ENCODE measurements at regions of chr6 and their contacts with region 1.

Region 1: DNA sequence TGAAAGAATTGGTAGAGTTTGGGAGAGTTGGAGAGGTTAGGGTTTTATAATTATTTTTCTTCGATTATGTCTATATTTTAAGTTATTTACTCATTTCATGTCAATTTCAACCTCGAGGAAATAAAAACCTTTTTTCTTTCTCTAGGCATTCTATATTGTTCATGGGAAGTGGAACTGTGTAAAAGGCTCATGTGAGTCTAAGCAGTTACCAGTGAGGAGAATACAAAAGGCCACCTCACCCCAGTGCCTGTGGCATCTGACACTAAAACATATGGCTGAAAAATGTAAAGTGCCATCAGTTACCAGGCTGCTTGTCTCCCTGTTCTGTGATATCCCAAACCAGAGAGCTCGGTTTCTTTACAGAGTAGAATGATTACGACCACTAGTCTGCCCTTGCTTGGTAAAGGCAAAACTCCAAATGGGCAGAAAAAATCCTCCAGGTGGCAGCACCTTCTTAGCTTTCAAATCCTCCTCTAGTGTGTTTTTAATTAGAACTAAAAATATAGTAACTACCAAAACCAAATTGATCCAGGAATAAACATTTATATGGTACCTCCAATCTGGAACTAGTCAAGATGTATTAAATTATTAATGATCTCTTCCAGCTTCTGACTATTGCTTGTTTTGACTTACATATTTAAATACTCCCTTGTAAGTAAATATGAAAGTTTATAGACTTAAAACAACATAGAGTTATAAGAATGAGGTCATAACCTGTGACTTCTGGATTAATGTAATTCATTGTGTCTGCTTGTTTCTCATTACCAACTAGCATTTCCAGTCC is 122.6 kb upstream of the MCHR2 start:
- DNase-seq: peak; percentile 43
- ATAC-seq: peak; percentile 89
- H3K4me3 ChIP-seq: no peak overlapping the region
- H3K27ac ChIP-seq: no peak overlapping the region
- H3K4me1 ChIP-seq: no peaks in the 10 kb centered on the region
- H3K27me3 ChIP-seq: no peaks in the 10 kb centered on the region; a peak in 1 of 5 replicates
- CTCF ChIP-seq: peak; percentile 63
- EP300 ChIP-seq: no peak
- POLR2A ChIP-seq: no peak
- RAD21 ChIP-seq: no peak

Region 2: GRCh38 chr6:100335991-100336390 is 219.4 kb after region 1 on chr6:
- CTCF ChIA-PET with region 1: no interaction called
- POLR2A ChIA-PET with region 1: no interaction called
- in situ Hi-C with region 1: no loop called
- intact Hi-C with region 1: loop called (anchors 10 kb)
- DNase-seq: no peak
- ATAC-seq: no peak
- H3K4me3 ChIP-seq: no peak overlapping the region
- H3K27ac ChIP-seq: no peak overlapping the region
- H3K4me1 ChIP-seq: no peaks in the 10 kb centered on the region
- H3K27me3 ChIP-seq: no peaks in the 10 kb centered on the region
- CTCF ChIP-seq: no peak
- EP300 ChIP-seq: no peak
- POLR2A ChIP-seq: no peak
- RAD21 ChIP-seq: no peak

Region 3: GRCh38 chr6:100573167-100573566 is 456.6 kb after region 1 on chr6:
- CTCF ChIA-PET with region 1: no interaction called
- POLR2A ChIA-PET with region 1: no interaction called
- in situ Hi-C with region 1: no loop called
- intact Hi-C with region 1: loop called (anchors 2 kb)
- DNase-seq: peak; percentile 15
- ATAC-seq: no peak
- H3K4me3 ChIP-seq: no peak overlapping the region
- H3K27ac ChIP-seq: no peak overlapping the region
- H3K4me1 ChIP-seq: no peaks in the 10 kb centered on the region
- H3K27me3 ChIP-seq: no peaks in the 10 kb centered on the region
- CTCF ChIP-seq: no peak
- EP300 ChIP-seq: no peak
- POLR2A ChIP-seq: no peak
- RAD21 ChIP-seq: no peak

Region 4: DNA sequence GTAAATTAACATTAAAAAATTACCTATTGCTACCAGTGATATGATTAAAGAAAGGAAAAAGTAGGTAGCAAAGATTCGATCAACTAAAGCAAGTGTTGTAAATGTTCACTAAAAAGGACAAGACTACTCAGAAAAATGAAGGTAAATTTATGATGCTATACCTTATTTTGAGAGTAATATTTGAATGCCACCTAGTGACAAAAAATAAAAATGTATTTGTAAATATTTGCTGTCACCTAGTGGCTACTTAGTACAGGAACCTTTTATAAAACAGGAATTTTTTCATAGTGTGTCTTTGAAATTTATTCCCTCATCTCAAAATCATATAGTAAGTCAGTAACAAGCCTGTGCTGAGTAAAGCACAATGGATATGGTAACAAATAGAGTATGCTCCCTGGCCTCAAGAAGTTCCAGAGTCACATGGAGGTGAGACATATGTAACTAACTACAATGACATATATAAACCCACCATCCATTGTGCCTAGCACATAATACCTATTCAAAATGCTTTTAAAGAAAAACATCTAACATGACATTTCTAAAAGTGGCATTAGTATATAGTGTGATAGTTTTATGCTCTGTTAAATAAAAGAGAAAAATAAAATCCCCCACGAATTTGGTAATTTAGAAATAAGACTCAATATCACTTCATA is 541.2 kb after region 1 on chr6:
- CTCF ChIA-PET with region 1: no interaction called
- POLR2A ChIA-PET with region 1: no interaction called
- in situ Hi-C with region 1: loop called (anchors 10 kb)
- intact Hi-C with region 1: loop called (anchors 2 kb)
- DNase-seq: no peak
- ATAC-seq: 0 out of 3 replicates have a peak, but pooled peaks have one; percentile 41
- H3K4me3 ChIP-seq: no peak overlapping the region
- H3K27ac ChIP-seq: no peak overlapping the region
- H3K4me1 ChIP-seq: no peaks in the 10 kb centered on the region
- H3K27me3 ChIP-seq: no peaks in the 10 kb centered on the region
- CTCF ChIP-seq: peak; percentile 31; the same call in 1 of the 2 replicates
- EP300 ChIP-seq: no peak
- POLR2A ChIP-seq: no peak
- RAD21 ChIP-seq: no peak

Region 5: DNA sequence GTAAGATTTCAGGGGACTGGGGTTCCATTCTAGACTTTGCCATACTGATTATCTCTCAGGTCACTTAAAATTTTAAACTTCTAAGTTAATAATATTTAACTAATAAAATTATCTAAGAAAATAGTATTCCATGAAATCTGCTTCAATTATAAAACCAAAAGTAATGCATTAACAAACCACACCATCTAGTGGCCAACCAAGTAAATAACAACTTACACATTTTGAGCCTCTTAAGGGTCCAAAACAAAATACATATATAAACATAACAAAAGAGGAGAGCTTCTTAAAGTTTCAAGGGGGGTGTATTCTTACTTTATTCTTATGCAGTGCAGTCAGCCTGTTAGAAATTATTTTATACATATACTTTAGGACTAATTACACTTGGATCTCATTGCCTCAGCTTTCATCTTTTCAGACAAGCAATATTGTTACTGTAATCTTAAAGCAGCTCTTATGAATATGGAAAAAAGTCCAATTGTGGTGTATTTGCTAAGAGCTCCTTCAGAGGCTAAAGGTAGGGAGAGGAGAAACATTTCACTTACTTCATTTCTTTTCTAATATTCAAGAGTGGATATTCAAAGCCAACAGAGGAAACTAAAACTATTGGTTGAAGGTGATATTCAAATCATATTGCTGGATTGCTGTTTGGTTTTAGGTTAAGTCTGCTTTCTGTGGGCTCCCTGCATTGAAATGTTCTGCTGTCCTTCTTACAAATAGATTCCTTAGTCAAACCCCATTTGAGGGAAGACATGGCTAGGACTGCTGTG is 547.9 kb after region 1 on chr6:
- CTCF ChIA-PET with region 1: no interaction called
- POLR2A ChIA-PET with region 1: no interaction called
- in situ Hi-C with region 1: loop called (anchors 10 kb)
- intact Hi-C with region 1: no loop called
- DNase-seq: no peak
- ATAC-seq: no peak
- H3K4me3 ChIP-seq: no peak overlapping the region
- H3K27ac ChIP-seq: no peak overlapping the region
- H3K4me1 ChIP-seq: no peaks in the 10 kb centered on the region
- H3K27me3 ChIP-seq: no peaks in the 10 kb centered on the region
- CTCF ChIP-seq: peak; percentile 32; the same call in 1 of the 2 replicates
- EP300 ChIP-seq: no peak
- POLR2A ChIP-seq: no peak
- RAD21 ChIP-seq: no peak

Region 6: GRCh38 chr6:100719883-100720682 is 603.5 kb after region 1 on chr6:
- CTCF ChIA-PET with region 1: interaction called, 3 read pairs
- POLR2A ChIA-PET with region 1: no interaction called
- in situ Hi-C with region 1: no loop called
- intact Hi-C with region 1: loop called (anchors 1 kb)
- DNase-seq: peak; percentile 9
- ATAC-seq: 0 out of 3 replicates have a peak, but pooled peaks have one; percentile 33
- H3K4me3 ChIP-seq: no peak overlapping the region
- H3K27ac ChIP-seq: no peak overlapping the region
- H3K4me1 ChIP-seq: no peaks in the 10 kb centered on the region
- H3K27me3 ChIP-seq: no peaks in the 10 kb centered on the region
- CTCF ChIP-seq: peak; percentile 51
- EP300 ChIP-seq: no peak
- POLR2A ChIP-seq: no peak
- RAD21 ChIP-seq: no peak

Measured in HepG2 (cell line).